Activated CD8-positive, alpha-beta T cell treated with anti-CD3 and anti-CD28 coated beads, Interleukin-2, amount 10 ng/mL, durations not matched to agents 7 days and 5 days (primary cell): ENCODE measurements at regions of chr20 and their contacts with region 1.

Region 1: DNA sequence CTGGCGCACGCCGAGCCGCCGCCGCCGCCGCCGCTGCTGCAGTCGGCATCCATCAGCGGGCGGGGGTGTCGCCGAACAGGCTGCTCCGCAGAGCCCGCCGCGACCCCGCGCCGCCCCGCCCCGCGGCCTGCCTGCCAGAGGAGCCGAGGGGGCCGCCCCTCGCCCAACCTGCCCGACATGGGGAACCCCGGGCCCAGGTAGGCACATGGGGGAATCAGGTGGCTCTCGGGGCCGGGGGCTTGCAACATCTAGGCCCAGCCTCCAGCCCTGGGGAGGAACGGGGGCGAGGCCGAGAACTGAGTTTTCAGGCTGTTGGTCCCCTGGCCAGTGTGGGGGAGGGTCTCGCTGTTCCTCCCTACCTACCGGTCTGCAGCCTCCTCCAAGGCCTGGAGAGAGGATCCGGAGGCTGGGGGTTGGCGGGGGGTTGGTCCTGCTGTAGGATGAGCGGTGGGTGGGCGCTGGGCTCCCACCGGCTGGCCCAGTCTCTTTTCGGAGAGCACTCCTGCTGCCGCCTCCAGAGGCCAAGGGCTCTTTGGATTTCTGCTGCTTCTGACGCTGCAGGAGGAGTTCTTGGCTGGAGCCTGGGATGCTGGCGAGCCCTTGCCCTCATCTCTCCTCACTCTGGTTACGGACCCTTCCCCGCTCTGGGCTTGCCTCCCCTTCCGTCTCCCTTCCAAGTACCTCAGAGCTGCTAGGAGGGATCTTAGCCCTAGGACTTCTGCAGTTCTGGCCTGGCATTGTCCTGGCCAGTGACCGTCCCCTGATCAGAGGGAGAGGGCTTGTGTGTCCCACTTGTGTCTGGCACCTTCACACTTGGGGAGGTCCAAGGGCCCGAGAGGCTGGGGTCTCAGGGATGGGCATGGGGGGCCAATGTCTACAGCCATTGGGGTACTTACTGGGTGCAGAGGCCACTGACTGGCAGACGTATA is at the start of gene EPB41L1:
- DNase-seq: no peak
- ATAC-seq: no peak
- H3K4me3 Mint-ChIP-seq: peak within 1 kb of the TSS; percentile 7
- H3K27ac Mint-ChIP-seq: no peak within 1 kb of the TSS
- H3K4me1 Mint-ChIP-seq: no peaks in the 10 kb centered on the region
- H3K27me3 Mint-ChIP-seq: peaks cover 35% of the 10 kb centered on the region
- total RNA-seq, gene EPB41L1: not detected

Region 2: DNA sequence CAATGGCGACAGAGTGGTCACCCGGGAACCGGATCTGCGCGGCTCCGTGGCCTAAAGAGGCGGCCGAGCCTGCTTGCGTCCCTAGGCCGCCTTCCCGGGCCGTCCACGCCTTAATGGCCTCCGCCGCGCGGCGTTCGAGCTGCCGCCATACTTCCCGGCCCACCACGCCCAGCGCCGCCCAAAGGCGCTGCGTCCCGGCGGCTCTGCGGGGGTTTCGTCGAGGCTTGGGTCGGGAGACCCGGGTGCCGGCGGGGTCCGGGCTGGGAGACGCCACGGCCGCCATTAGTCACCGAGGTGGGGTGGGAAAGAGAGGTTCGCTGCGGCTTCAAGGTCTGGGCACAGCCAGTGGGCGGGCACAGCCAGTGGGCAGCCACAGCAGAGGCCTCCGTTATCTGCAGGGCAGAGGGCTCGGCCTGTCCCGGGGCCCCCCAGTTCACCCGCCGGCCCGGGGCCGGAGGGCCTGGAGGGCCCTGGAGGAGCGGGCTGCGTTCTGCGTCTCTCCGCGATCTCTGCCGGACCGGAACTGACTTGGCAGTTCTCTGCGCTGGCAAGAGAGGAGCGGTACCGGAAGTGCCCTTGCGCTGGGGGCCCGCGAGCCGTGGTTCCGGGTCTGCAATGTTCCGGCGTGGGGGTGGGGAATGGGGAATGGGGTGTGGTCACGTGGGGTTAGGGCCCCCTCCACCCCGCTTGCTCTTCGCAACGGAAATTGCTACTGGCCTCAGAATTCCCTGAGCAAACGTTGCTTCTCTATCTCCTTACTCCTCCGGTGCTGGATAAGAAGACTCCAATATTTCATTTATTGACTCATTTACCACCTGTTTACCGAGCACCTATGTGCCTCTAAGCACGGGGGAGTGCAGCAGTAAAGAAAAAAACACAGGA is 104.3 kb before region 1 on chr20:
- CTCF ChIA-PET with region 1: no interaction called
- POLR2A ChIA-PET with region 1: no interaction called
- DNase-seq: peak; percentile 92
- ATAC-seq: peak; percentile 95
- H3K4me3 Mint-ChIP-seq: peak overlapping the region; percentile 91
- H3K27ac Mint-ChIP-seq: peak overlapping the region; percentile 89
- H3K4me1 Mint-ChIP-seq: peaks cover 32% of the 10 kb centered on the region
- H3K27me3 Mint-ChIP-seq: peaks cover 12% of the 10 kb centered on the region

Region 3: GRCh38 chr20:36113566-36114250 is 41.3 kb before region 1 on chr20:
- CTCF ChIA-PET with region 1: no interaction called
- POLR2A ChIA-PET with region 1: no interaction called
- DNase-seq: no peak
- ATAC-seq: no peak
- H3K4me3 Mint-ChIP-seq: no peak overlapping the region
- H3K27ac Mint-ChIP-seq: no peak overlapping the region
- H3K4me1 Mint-ChIP-seq: no peaks in the 10 kb centered on the region
- H3K27me3 Mint-ChIP-seq: peaks cover 20% of the 10 kb centered on the region

Region 4: DNA sequence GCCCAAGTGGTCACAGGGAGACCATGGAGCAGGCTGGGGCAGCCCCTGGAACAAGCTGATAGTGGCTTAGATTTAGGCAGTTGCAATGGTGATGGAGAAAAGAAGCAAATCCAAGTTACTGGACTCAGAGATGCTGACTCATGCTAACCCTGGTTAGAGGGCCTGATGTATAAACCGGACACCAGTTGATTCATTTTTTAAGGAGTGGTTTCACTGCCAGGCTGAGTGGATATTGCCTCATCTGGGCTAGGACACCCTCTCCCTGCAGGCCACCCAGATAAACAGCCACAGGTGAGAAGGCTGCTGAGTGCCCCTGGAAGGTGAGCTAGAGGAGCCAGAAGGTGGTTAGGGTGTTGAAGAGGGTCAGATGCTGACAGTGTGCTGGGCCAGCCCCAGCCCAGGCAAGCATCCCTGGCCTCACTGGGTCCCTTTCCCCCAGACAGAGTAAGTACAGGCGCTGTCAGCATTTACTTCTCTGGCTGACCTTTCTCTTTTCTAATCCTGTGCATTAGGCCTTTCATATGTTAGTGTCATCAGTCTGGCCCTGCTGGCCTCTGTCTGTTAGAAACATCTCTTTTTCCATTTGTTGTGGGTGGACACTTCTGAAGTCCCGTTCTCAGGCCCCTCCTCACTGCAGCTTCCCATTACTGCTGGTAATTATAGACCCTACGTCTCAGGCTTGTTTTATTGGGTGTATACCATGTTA is 13.0 kb after region 1 on chr20:
- CTCF ChIA-PET with region 1: interaction called, 10 read pairs
- POLR2A ChIA-PET with region 1: interaction called, 3 read pairs
- DNase-seq: no peak
- ATAC-seq: no peak
- H3K4me3 Mint-ChIP-seq: no peak overlapping the region
- H3K27ac Mint-ChIP-seq: no peak overlapping the region
- H3K4me1 Mint-ChIP-seq: peaks cover 2% of the 10 kb centered on the region
- H3K27me3 Mint-ChIP-seq: peaks cover 9% of the 10 kb centered on the region